PC-3 (cell line): ENCODE measurements at regions of chr3 and their contacts with region 1.

Region 1: GRCh38 chr3:120417272-120417911 is 33.4 kb downstream of the FSTL1 start:
- DNase-seq: peak; percentile 99
- ATAC-seq: peak; percentile 84
- H3K4me3 ChIP-seq: peak overlapping the region; percentile 57
- H3K27ac ChIP-seq: peak overlapping the region; percentile 56
- H3K4me1 ChIP-seq: peaks cover 24% of the 10 kb centered on the region
- H3K27me3 ChIP-seq: no peaks in the 10 kb centered on the region
- CTCF ChIP-seq: peak; percentile 97

Region 2: GRCh38 chr3:120348981-120349818 is 68.2 kb before region 1 on chr3 and contains the start of gene LRRC58:
- CTCF ChIA-PET with region 1: interaction called, 17 read pairs
- POLR2A ChIA-PET with region 1: no interaction called
- intact Hi-C with region 1: loop called (anchors 1 kb)
- DNase-seq: peak; percentile 99
- ATAC-seq: peak; percentile 91
- H3K4me3 ChIP-seq: peak within 1 kb of the TSS; percentile 74
- H3K27ac ChIP-seq: peak within 1 kb of the TSS; percentile 51
- H3K4me1 ChIP-seq: peaks cover 41% of the 10 kb centered on the region
- H3K27me3 ChIP-seq: no peaks in the 10 kb centered on the region
- CTCF ChIP-seq: peak; percentile 52
- total RNA-seq, gene LRRC58: 33.7 and 35.2 TPM in 2 replicates

Region 3: GRCh38 chr3:120450600-120451271 is 33.3 kb after region 1 on chr3 and contains the start of gene FSTL1:
- CTCF ChIA-PET with region 1: interaction called, 15 read pairs
- POLR2A ChIA-PET with region 1: no interaction called
- intact Hi-C with region 1: loop called (anchors 2 kb)
- DNase-seq: peak; percentile 45
- ATAC-seq: peak; percentile 49
- H3K4me3 ChIP-seq: peak within 1 kb of the TSS; percentile 81
- H3K27ac ChIP-seq: peak within 1 kb of the TSS; percentile 25
- H3K4me1 ChIP-seq: peaks cover 38% of the 10 kb centered on the region
- H3K27me3 ChIP-seq: no peaks in the 10 kb centered on the region
- CTCF ChIP-seq: no peak
- total RNA-seq, gene FSTL1: 178 and 185 TPM in 2 replicates

Region 4: GRCh38 chr3:120567370-120568201 is 150.2 kb after region 1 on chr3:
- CTCF ChIA-PET with region 1: interaction called, 26 read pairs
- POLR2A ChIA-PET with region 1: no interaction called
- intact Hi-C with region 1: no loop called
- DNase-seq: peak; percentile 70
- ATAC-seq: peak; percentile 86
- H3K4me3 ChIP-seq: peak overlapping the region; percentile 65
- H3K27ac ChIP-seq: no peak overlapping the region
- H3K4me1 ChIP-seq: peaks cover 9% of the 10 kb centered on the region; the same call in 1 of the 2 replicates
- H3K27me3 ChIP-seq: no peaks in the 10 kb centered on the region
- CTCF ChIP-seq: peak; percentile 86

Region 5: GRCh38 chr3:120742198-120742849 is 324.9 kb after region 1 on chr3 and contains the starts of genes GTF2E1 and RABL3:
- CTCF ChIA-PET with region 1: no interaction called
- POLR2A ChIA-PET with region 1: no interaction called
- intact Hi-C with region 1: loop called (anchors 5 kb)
- DNase-seq: peak; percentile 100
- ATAC-seq: peak; percentile 98
- H3K4me3 ChIP-seq: peak within 1 kb of the TSS; percentile 93
- H3K27ac ChIP-seq: peak within 1 kb of the TSS; percentile 79
- H3K4me1 ChIP-seq: peaks cover 16% of the 10 kb centered on the region
- H3K27me3 ChIP-seq: no peaks in the 10 kb centered on the region
- CTCF ChIP-seq: no peak
- total RNA-seq, gene GTF2E1: 10.7 and 15.2 TPM in 2 replicates
- total RNA-seq, gene RABL3: 21.3 and 24.3 TPM in 2 replicates